Endothelial cell of umbilical vein (primary cell): ENCODE measurements at regions of chr10 and their contacts with region 1.

Region 1: GRCh38 chr10:69451209-69451783 is at the start of gene TSPAN15:
- DNase-seq: peak; percentile 87
- H3K4me3 ChIP-seq: peak within 1 kb of the TSS; percentile 61 to 92 (median 81)
- H3K27ac ChIP-seq: peak within 1 kb of the TSS; percentile 5
- H3K4me1 ChIP-seq: peaks cover 67% of the 10 kb centered on the region
- H3K27me3 ChIP-seq: no peaks in the 10 kb centered on the region
- CTCF ChIP-seq: no peak
- POLR2A ChIP-seq: no peak
- total RNA-seq, gene TSPAN15: 78.4 and 100 TPM in 2 replicates

Region 2: DNA sequence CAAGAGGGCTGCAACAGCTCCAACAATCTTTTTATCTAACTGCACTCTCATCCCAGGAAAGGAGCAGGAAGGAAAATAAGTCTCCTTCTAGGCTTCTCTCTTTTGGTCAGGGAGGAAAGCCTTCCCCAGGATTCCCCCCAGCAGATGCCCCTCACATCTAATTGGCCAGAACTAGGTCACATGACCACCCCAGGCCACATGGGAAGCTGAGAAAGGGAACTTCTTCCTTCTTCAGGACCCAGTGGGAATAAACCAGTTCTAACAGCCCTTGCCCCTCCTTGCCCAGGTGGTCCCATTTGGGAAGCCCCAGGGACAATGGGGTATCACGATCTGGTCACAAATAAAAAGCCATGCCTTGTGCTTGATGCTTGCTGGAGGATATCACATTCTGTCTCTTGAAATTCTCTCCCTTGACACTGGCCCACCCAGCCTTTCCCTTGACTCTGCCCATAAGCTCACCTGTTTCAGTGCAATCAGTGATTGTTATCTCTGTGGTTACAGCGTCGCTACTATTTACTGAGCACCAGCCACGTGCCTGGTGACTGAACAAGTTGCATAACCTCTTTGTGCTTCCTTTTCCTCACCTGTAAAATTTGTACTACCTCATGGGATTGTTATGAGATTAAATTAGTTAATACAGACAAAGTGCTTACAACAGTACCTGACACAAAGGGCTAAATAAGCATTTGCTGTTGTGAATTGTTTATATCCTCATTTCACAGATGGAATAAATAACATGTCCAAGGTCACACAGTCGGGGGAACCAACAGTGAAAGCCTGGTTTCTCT is 25.6 kb before region 1 on chr10:
- CTCF ChIA-PET with region 1: interaction called, 8 read pairs
- POLR2A ChIA-PET with region 1: interaction called, 5 read pairs
- dilution Hi-C with region 1: no loop called
- intact Hi-C with region 1: loop called (anchors 2 kb)
- DNase-seq: no peak
- H3K4me3 ChIP-seq: no peak overlapping the region
- H3K27ac ChIP-seq: no peak overlapping the region
- H3K4me1 ChIP-seq: no peaks in the 10 kb centered on the region
- H3K27me3 ChIP-seq: peaks cover 0 to 1% of the 10 kb centered on the region in 2 experiments
- CTCF ChIP-seq: no peak
- POLR2A ChIP-seq: no peak

Region 3: GRCh38 chr10:69464801-69465401 is 13.6 kb after region 1 on chr10:
- CTCF ChIA-PET with region 1: interaction called, 60 read pairs
- POLR2A ChIA-PET with region 1: interaction called, 9 read pairs
- dilution Hi-C with region 1: no loop called
- intact Hi-C with region 1: loop called (anchors 2 kb)
- DNase-seq: no peak
- H3K4me3 ChIP-seq: no peak overlapping the region
- H3K27ac ChIP-seq: peak overlapping the region; percentile 45
- H3K4me1 ChIP-seq: peaks cover 51% of the 10 kb centered on the region
- H3K27me3 ChIP-seq: no peaks in the 10 kb centered on the region
- CTCF ChIP-seq: no peak
- POLR2A ChIP-seq: no peak

Region 4: DNA sequence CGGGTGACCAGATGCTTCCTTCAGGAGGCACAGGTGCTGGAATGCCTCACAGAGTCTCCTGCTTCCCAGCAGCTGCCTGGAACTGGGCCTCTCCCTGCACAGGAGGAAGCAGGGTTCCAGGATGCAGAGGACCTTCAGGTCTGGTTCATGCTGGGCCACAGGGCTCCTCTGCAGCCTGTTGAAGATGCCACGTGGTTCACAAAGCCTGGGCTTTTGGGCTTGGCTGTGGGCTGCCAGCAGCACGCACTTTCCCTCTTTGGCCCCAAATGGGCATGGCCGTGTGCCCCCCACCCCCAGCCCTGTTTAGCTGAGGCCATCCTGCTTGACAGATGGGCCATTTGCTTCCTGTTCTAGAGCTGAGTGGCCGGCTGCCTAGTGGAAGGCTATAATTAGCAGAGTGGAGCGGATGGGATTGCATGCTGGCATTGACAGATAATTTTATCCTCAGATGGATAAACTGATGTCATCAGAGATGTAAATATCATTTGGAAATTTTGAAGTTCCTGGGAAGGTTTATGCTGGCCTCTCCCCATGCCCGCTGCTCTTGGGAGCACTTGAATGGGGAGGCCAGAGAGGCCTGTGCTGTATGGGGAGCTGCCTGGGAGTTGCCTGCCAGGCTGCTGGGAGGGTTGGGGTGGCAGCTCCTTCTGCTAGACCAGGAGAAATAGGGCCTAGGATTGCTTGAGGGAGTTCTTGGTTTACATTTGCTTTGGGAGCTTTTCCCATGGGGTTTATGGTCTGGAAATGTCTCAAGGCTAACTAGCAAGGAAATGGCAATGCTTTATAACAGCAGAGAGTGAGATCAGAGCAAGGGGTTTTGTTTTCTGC is 28.2 kb after region 1 on chr10:
- CTCF ChIA-PET with region 1: interaction called, 11 read pairs
- POLR2A ChIA-PET with region 1: interaction called, 3 read pairs
- dilution Hi-C with region 1: no loop called
- intact Hi-C with region 1: loop called (anchors 1 kb)
- DNase-seq: peak; percentile 57
- H3K4me3 ChIP-seq: no peak overlapping the region
- H3K27ac ChIP-seq: peak overlapping the region; percentile 47
- H3K4me1 ChIP-seq: peaks cover 52% of the 10 kb centered on the region
- H3K27me3 ChIP-seq: no peaks in the 10 kb centered on the region
- CTCF ChIP-seq: no peak
- POLR2A ChIP-seq: no peak

Region 5: GRCh38 chr10:69494626-69495558 is 43.6 kb after region 1 on chr10:
- CTCF ChIA-PET with region 1: interaction called, 7 read pairs
- POLR2A ChIA-PET with region 1: interaction called, 3 read pairs
- dilution Hi-C with region 1: loop called (anchors 5 kb)
- intact Hi-C with region 1: loop called (anchors 2 kb)
- DNase-seq: no peak
- H3K4me3 ChIP-seq: no peak overlapping the region
- H3K27ac ChIP-seq: no peak overlapping the region
- H3K4me1 ChIP-seq: peaks cover 12% of the 10 kb centered on the region
- H3K27me3 ChIP-seq: no peaks in the 10 kb centered on the region
- CTCF ChIP-seq: no peak
- POLR2A ChIP-seq: no peak

Region 6: GRCh38 chr10:69644658-69645295 is 193.5 kb after region 1 on chr10:
- CTCF ChIA-PET with region 1: no interaction called
- POLR2A ChIA-PET with region 1: no interaction called
- dilution Hi-C with region 1: no loop called
- intact Hi-C with region 1: no loop called
- DNase-seq: peak; percentile 49
- H3K4me3 ChIP-seq: no peak overlapping the region
- H3K27ac ChIP-seq: no peak overlapping the region
- H3K4me1 ChIP-seq: no peaks in the 10 kb centered on the region
- H3K27me3 ChIP-seq: peaks cover 2 to 3% of the 10 kb centered on the region in 2 experiments
- CTCF ChIP-seq: peak; percentile 84 to 86
- POLR2A ChIP-seq: no peak